ENCODE measurements at regions of chr10 and their contacts with region 1.

Region 1: GRCh38 chr10:68955832-68956532 is at the start of gene DDX21:
- DNase-seq: peak; percentile 97
- H3K4me3 Mint-ChIP-seq: peak within 1 kb of the TSS; percentile 93
- H3K27ac Mint-ChIP-seq: peak within 1 kb of the TSS; percentile 99
- H3K4me1 Mint-ChIP-seq: peaks cover 26% of the 10 kb centered on the region
- H3K27me3 Mint-ChIP-seq: no peaks in the 10 kb centered on the region
- total RNA-seq, gene DDX21: 284 and 286 TPM in 2 replicates

Region 2: GRCh38 chr10:68981074-68981473 is 25.1 kb after region 1 on chr10:
- intact Hi-C with region 1: loop called (anchors 2 kb)
- DNase-seq: no peak
- H3K4me3 Mint-ChIP-seq: no peak overlapping the region
- H3K27ac Mint-ChIP-seq: no peak overlapping the region
- H3K4me1 Mint-ChIP-seq: peaks cover 6% of the 10 kb centered on the region
- H3K27me3 Mint-ChIP-seq: no peaks in the 10 kb centered on the region

Region 3: DNA sequence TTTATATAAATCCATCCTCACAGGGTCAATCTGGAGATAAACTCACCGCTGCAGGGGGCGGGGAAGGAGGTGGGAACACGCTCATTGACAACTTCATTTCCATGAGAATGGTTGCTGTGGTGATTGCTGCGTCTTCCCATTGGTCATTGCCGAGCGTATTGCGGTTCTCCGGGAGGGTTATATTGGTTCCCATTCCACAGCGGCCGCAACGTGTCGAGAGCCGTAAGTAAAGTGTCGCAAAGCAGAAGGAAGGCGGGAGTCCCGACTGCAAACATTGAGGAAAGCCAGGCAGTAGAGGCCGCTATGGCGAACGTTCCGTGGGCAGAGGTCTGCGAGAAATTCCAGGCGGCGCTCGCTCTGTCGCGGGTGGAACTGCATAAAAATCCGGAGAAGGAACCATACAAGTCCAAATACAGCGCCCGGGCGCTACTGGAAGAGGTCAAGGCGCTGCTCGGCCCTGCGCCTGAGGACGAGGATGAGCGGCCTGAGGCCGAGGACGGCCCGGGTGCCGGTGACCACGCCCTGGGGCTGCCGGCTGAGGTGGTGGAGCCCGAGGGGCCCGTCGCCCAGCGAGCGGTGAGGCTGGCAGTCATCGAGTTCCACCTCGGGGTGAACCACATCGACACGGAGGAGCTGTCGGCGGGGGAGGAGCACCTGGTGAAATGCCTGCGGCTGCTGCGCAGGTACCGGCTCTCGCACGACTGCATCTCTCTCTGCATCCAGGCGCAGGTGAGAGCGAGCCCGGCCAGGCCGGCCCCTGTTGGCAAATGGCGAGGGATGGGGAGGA is 32.7 kb after region 1 on chr10 and contains the start of gene KIFBP:
- intact Hi-C with region 1: loop called (anchors 1 kb)
- DNase-seq: peak; percentile 95
- H3K4me3 Mint-ChIP-seq: peak within 1 kb of the TSS; percentile 89
- H3K27ac Mint-ChIP-seq: peak within 1 kb of the TSS; percentile 91
- H3K4me1 Mint-ChIP-seq: peaks cover 41% of the 10 kb centered on the region
- H3K27me3 Mint-ChIP-seq: no peaks in the 10 kb centered on the region
- total RNA-seq, gene KIFBP: 15.0 TPM in 2 replicates

Measured in activated CD4-positive, alpha-beta T cell treated with anti-CD3 and anti-CD28 coated beads, Interleukin-2, amount 10 ng/mL, durations not matched to agents 24 days and 14 days (primary cell).